ENCODE measurements at regions of chr4 and their contacts with region 1.

Region 1: DNA sequence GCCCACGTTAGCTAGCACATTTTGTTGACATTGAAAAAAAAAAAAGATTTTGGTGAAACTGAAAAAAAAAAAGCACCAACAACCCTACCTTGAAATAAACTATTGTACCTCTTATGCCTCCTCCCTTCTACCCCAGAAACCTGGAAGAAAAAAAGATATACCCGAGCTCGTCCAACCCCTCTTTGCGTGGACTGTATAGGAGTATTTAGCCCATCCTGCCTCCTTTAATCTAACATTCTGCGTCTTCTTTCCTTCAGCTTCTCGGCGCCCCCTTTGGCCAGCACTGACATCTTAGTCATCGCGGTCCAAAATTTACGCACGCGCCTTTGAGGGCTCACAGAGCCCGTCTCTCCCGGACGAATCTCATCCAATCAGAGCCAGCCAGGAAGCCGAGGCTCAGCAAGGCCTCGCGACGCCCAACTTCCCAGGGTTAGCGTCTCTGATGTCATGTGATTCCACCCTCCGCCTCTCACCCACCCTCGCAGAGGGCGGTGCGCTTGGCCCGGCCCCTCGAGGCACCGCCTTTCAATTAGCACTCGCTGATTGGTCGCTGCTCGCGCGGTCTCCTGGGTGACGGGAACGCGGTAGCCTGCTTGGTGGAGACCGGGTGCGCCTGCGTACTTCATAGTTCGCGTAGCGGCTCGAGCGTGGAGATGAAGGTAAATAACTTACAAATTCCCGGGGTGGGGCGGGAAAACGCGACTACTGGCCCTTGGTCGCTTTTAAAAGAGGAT is at the start of gene WDR19:
- DNase-seq: peak; percentile 99
- H3K4me3 ChIP-seq: peak within 1 kb of the TSS; percentile 71 to 81
- H3K27ac ChIP-seq: peak within 1 kb of the TSS; percentile 74 to 84
- H3K4me1 ChIP-seq: peaks cover 0 to 19% (median 12%) of the 10 kb centered on the region in 4 donors
- H3K27me3 ChIP-seq: no peaks in the 10 kb centered on the region
- CTCF ChIP-seq: peak; percentile 31 to 48

Region 2: DNA sequence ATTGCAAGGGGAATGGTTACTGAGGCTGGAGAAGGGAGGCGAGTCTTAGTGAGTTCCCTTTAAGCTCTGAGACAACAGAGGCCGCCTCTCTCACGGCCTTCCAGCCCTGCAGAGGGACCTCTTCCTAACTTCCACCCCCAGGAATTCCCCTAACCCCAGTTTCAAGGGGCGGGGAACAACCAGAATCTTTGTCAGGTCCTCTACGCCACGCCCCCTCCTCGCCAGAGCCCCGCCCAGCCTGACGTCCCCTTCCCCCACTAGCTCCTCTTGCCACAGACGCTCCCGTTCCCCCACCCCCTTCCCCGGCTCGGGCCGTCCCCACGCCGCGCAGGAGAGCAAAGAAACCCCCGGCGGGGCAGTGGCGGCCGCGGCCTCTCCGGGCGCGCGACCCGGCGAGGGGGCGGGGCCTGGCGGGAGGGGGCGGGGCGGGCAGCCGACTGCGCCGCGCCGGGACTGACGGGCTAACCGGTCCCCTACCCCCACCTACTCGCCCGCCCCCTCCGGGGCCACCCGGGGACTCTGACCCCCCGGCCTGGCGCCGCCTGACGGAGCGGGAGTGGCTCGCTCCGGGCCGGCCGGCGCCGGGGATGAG is 137.6 kb before region 1 on chr4:
- intact Hi-C with region 1: loop called (anchors 2 kb)
- DNase-seq: peak; percentile 91 to 94
- H3K4me3 ChIP-seq: peak overlapping the region; percentile 68 to 77
- H3K27ac ChIP-seq: peak overlapping the region; percentile 62 to 84
- H3K4me1 ChIP-seq: peaks cover 0 to 10% (median 0%) of the 10 kb centered on the region in 4 donors
- H3K27me3 ChIP-seq: no peaks in the 10 kb centered on the region
- CTCF ChIP-seq: no peak

Region 3: GRCh38 chr4:39243462-39243861 is 61.4 kb after region 1 on chr4:
- intact Hi-C with region 1: no loop called
- DNase-seq: no peak
- H3K4me3 ChIP-seq: no peak overlapping the region
- H3K27ac ChIP-seq: no peak overlapping the region
- H3K4me1 ChIP-seq: no peaks in the 10 kb centered on the region
- H3K27me3 ChIP-seq: no peaks in the 10 kb centered on the region
- CTCF ChIP-seq: no peak